ENCODE measurements at regions of chr4 and their contacts with region 1.

Region 1: GRCh38 chr4:159764343-159764952 is 661.6 kb downstream of the RAPGEF2 start:
- DNase-seq: peak; percentile 92
- H3K4me3 ChIP-seq: peak overlapping the region; percentile 9
- H3K27ac ChIP-seq: peak overlapping the region; percentile 67
- H3K4me1 ChIP-seq: peaks cover 58% of the 10 kb centered on the region
- H3K27me3 ChIP-seq: no peaks in the 10 kb centered on the region
- CTCF ChIP-seq: peak; percentile 78

Region 2: DNA sequence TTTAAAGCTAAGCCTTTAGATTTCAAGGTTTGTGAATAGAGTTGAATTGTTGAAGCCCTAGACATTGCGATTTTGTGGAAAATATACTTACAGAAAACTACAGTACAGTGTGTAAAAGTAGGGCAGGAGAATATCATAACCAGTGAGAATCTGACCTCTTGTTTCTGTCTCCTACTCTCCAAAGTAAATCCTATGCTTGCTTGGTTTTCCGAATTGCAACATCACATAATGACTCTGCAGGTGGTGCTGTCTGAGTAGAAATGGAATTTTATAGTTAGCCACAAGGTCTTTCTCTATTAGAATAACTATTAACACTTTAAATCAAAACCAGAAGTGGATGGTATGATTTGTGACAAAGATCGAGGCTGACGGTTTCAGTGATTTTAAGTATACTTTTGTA is 156.0 kb before region 1 on chr4:
- CTCF ChIA-PET with region 1: no interaction called
- POLR2A ChIA-PET with region 1: no interaction called
- intact Hi-C with region 1: loop called (anchors 5 kb)
- DNase-seq: peak; percentile 87
- H3K4me3 ChIP-seq: no peak overlapping the region
- H3K27ac ChIP-seq: peak overlapping the region; percentile 1
- H3K4me1 ChIP-seq: peaks cover 14% of the 10 kb centered on the region
- H3K27me3 ChIP-seq: no peaks in the 10 kb centered on the region
- CTCF ChIP-seq: peak; percentile 56

Region 3: DNA sequence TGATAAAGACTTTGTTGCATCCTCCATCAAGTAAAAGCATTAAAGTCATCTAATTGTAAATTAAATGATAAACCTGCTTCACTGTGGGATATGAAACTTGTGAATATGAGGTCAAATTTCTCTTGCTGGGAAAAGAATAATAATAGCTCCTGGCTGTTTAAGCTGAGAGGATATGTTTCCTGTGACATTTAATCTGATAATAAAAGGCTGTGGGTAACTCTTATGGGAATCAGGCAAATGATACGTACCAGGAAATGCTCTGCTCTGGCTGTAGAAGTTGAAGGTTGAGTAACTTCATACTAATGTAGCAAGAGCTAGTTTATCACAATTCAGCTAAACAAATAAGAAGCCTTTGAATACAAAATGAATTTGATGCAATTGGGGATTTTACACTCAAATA is 86.9 kb before region 1 on chr4:
- CTCF ChIA-PET with region 1: no interaction called
- POLR2A ChIA-PET with region 1: no interaction called
- intact Hi-C with region 1: loop called (anchors 5 kb)
- DNase-seq: peak; percentile 96
- H3K4me3 ChIP-seq: no peak overlapping the region
- H3K27ac ChIP-seq: peak overlapping the region; percentile 55
- H3K4me1 ChIP-seq: peaks cover 26% of the 10 kb centered on the region
- H3K27me3 ChIP-seq: peaks cover 66% of the 10 kb centered on the region
- CTCF ChIP-seq: no peak

Region 4: GRCh38 chr4:161252520-161253141 is 1488.2 kb after region 1 on chr4:
- CTCF ChIA-PET with region 1: no interaction called
- POLR2A ChIA-PET with region 1: no interaction called
- intact Hi-C with region 1: loop called (anchors 10 kb)
- DNase-seq: peak; percentile 45
- H3K4me3 ChIP-seq: no peak overlapping the region
- H3K27ac ChIP-seq: no peak overlapping the region
- H3K4me1 ChIP-seq: no peaks in the 10 kb centered on the region
- H3K27me3 ChIP-seq: no peaks in the 10 kb centered on the region
- CTCF ChIP-seq: peak; percentile 80

Measured in A673 (cell line).